AG04450 (cell line): ENCODE measurements at regions of chr15 and their contacts with region 1.

Region 1: DNA sequence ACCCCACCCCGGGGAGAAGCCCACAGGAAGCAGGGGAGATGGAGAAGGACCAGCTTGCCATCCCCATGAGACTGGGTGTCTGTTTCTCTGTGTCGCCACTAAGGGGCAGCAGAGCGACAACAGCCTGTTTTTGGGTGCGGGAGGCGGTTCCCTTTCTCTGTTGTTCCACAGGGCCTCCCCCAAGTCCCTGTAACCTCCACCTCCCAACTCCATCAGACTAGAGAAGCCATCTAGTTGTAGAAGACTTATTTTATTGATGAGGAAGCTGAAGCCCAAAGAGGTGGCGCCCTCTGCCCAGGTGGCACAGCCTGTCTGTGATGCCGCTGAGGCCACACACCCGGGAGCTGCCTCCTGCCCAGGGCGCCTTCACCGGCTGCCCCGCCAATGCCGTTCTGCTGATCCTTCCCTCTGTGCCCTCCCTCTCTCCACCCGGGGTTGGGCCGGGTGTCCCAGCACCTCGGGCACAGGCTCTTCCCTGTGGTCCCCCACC is 3.9 kb upstream of the CCDC9B start:
- DNase-seq: no peak
- H3K4me3 ChIP-seq: no peak overlapping the region
- H3K27ac ChIP-seq: no peak overlapping the region
- H3K27me3 ChIP-seq: no peaks in the 10 kb centered on the region
- CTCF ChIP-seq: peak; percentile 77

Region 2: GRCh38 chr15:40330368-40330836 is 14.3 kb before region 1 on chr15:
- CTCF ChIA-PET with region 1: interaction called, 50 read pairs
- POLR2A ChIA-PET with region 1: interaction called, 101 read pairs
- DNase-seq: no peak
- H3K4me3 ChIP-seq: no peak overlapping the region
- H3K27ac ChIP-seq: no peak overlapping the region
- H3K27me3 ChIP-seq: no peaks in the 10 kb centered on the region
- CTCF ChIP-seq: no peak

Region 3: DNA sequence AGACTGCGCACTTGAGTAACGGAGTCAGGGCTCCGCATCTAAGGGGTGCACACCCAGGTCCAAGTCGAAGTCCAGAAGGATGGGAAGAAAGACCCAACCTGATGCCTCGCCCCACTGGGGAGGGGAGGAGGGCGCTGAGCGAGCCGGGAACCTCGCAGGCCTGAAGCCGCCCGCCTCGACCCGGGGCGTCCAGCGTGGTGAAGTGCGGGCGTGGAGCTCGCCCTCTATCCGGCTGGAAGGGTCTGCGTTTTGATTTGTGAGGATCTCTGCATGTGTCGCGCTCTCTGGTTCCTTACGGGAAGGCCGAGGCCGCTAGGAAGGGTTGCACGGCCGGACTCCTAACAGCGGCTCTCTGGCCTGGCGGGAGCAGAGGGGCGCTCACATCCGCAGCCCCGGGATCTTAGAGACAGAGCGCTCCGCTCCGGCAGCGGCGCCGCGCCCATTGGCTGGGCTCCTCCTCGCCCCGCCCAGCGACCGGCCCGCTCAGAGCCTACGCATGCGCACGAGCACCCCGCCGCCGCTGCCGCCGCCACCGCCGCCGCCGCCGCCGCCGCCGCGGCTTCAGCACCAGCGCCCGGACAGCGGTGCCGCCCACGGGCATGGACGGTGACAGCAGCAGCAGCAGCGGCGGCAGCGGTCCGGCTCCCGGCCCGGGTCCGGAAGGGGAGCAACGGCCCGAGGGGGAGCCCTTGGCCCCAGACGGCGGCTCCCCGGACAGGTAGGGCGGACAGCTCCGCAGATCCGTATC is 13.2 kb after region 1 on chr15 and contains the start of gene DISP2:
- CTCF ChIA-PET with region 1: interaction called, 19 read pairs
- POLR2A ChIA-PET with region 1: no interaction called
- DNase-seq: no peak
- H3K4me3 ChIP-seq: peak within 1 kb of the TSS; percentile 57
- H3K27ac ChIP-seq: peak within 1 kb of the TSS; percentile 2
- H3K27me3 ChIP-seq: peaks cover 35% of the 10 kb centered on the region
- CTCF ChIP-seq: no peak
- polyA plus RNA-seq, gene DISP2: 0.11 and 0.36 TPM in 2 replicates

Region 4: GRCh38 chr15:40367686-40368611 is 23.3 kb after region 1 on chr15:
- CTCF ChIA-PET with region 1: interaction called, 16 read pairs
- POLR2A ChIA-PET with region 1: interaction called, 3 read pairs
- DNase-seq: peak; percentile 55
- H3K4me3 ChIP-seq: peak overlapping the region; percentile 44
- H3K27ac ChIP-seq: no peak overlapping the region
- H3K27me3 ChIP-seq: peaks cover 27% of the 10 kb centered on the region
- CTCF ChIP-seq: peak; percentile 79

Region 5: GRCh38 chr15:40430271-40430805 is 85.7 kb after region 1 on chr15:
- CTCF ChIA-PET with region 1: no interaction called
- POLR2A ChIA-PET with region 1: no interaction called
- DNase-seq: no peak
- H3K4me3 ChIP-seq: no peak overlapping the region
- H3K27ac ChIP-seq: no peak overlapping the region
- H3K27me3 ChIP-seq: peaks cover 50% of the 10 kb centered on the region
- CTCF ChIP-seq: no peak